HepG2 (cell line): ENCODE measurements at regions of chr6 and their contacts with region 1.

Region 1: DNA sequence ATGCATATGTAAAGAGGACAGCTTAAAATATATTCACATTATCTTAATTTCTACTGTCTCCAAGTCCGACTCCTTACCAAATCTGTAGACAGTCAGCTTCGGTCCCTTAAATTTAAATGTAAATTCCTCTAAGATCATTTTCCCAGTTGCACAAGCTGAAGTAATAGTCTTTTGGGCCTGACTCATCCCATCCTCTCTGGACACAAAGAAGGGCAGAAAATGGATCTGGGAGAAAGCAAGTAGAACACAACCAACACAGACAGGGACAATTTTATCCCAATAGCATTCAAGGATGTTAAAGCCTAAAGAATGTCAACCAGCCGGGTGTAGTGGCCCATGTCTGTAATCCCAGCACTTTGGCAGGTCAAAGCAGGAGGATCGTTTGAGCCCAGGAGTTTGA is 228.3 kb downstream of the ARHGAP18 start:
- DNase-seq: no peak
- ATAC-seq: no peak
- H3K4me3 ChIP-seq: no peak overlapping the region
- H3K27ac ChIP-seq: no peak overlapping the region
- H3K4me1 ChIP-seq: no peaks in the 10 kb centered on the region
- H3K27me3 ChIP-seq: no peaks in the 10 kb centered on the region
- CTCF ChIP-seq: no peak
- EP300 ChIP-seq: no peak
- POLR2A ChIP-seq: no peak
- RAD21 ChIP-seq: no peak

Region 2: DNA sequence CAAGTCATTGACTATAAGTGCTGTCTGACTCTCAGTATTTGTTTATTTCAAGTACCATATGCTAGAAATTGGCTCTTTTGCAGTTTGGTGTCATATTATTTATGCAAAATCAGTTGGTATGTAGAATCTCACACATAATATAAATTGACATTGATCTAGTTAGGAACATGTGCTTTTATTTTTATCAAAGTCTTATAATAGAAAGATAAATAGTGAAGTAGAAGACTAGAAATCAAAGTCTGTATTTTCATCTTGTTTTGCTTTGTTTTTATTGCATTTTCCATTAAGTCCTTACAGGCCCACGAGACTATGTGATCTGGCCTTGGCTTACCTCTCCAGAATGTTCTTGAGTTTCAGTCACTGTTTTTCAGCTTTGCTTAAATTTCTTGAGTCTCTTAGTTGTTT is 298.5 kb before region 1 on chr6:
- CTCF ChIA-PET with region 1: no interaction called
- POLR2A ChIA-PET with region 1: no interaction called
- in situ Hi-C with region 1: no loop called
- intact Hi-C with region 1: no loop called
- DNase-seq: no peak
- ATAC-seq: no peak
- H3K4me3 ChIP-seq: no peak overlapping the region
- H3K27ac ChIP-seq: no peak overlapping the region
- H3K4me1 ChIP-seq: no peaks in the 10 kb centered on the region
- H3K27me3 ChIP-seq: no peaks in the 10 kb centered on the region
- CTCF ChIP-seq: no peak
- EP300 ChIP-seq: no peak
- POLR2A ChIP-seq: no peak
- RAD21 ChIP-seq: no peak

Region 3: DNA sequence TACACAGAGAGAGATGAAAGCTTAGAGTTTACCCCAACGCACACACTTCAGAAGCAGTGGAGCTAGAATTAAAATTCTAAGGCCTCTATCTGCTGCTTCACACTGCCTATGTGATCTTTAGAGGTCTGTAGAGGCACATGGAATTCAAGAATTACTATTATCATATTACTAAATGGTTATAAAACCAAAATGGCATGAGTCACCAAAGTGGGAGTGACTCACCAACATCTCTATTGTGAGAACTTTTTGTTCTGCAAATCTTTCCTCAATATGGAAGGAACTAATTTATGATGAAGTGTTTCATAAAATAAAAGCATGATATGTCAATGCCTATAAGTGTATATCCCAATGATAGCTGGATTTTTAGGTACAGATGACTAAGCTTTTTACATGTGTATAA is 407.9 kb after region 1 on chr6:
- CTCF ChIA-PET with region 1: no interaction called
- POLR2A ChIA-PET with region 1: no interaction called
- in situ Hi-C with region 1: no loop called
- intact Hi-C with region 1: loop called (anchors 5 kb)
- DNase-seq: no peak
- ATAC-seq: no peak
- H3K4me3 ChIP-seq: no peak overlapping the region
- H3K27ac ChIP-seq: no peak overlapping the region
- H3K4me1 ChIP-seq: no peaks in the 10 kb centered on the region
- H3K27me3 ChIP-seq: peaks cover 1 to 4% of the 10 kb centered on the region in 2 experiments; a peak in 1 of 5 replicates
- CTCF ChIP-seq: no peak
- EP300 ChIP-seq: no peak
- POLR2A ChIP-seq: no peak
- RAD21 ChIP-seq: no peak